ENCODE measurements at regions of chr5 and their contacts with region 1.

Region 1: DNA sequence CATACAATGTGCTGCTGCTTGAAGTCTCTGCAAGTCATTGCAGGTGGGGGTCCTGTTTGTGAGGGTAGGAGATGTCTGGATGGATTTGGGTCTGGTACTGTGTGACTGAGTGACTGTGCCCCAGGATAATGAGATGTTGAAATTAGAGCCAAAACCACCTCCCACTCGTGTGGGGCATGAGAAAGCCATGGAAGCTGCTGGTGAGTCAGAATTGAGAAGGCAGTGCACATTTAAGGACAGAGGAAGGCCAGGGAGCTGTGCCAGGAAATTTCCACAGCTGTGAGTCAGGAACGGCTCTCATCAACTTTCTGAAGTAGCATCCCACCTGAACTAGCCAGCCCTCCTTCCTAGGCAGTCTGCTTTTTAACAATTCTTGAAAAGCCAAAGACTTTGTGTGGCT is 229.8 kb downstream of the DRD1 start:
- DNase-seq: peak; percentile 85
- H3K4me3 ChIP-seq: no peak overlapping the region
- H3K27ac ChIP-seq: no peak overlapping the region
- H3K27me3 ChIP-seq: no peaks in the 10 kb centered on the region
- CTCF ChIP-seq: no peak

Region 2: DNA sequence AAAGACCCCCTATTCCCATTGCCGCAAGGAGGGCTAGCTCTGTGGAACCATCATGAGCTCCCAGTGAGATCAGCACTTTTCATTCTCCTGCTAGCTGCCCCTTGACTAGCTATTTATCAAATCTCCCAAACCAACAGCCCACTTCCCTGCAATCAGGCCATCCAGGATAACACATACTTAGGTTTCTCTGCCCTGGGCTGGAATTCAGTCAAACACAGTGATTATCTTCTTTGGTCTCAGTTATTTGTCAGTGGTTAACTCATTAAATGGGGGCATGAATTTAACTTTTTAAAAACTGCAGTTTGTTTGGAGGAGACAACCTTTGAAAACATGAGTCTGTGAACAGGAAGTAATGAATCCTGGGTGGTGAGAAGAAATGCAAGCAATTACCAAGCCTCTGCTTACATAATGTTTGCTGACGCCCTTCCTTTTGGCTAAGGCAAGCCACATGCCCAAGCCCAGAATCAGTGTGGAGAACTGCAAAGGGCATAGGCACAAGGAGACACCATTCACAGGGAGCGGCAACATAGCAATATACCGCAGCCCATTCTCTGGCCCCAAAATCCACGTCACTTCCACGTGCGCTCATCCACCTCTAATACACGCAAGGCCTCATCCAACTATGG is 45.2 kb before region 1 on chr5:
- CTCF ChIA-PET with region 1: no interaction called
- POLR2A ChIA-PET with region 1: no interaction called
- DNase-seq: no peak
- H3K4me3 ChIP-seq: no peak overlapping the region
- H3K27ac ChIP-seq: no peak overlapping the region
- H3K27me3 ChIP-seq: no peaks in the 10 kb centered on the region
- CTCF ChIP-seq: no peak

Region 3: GRCh38 chr5:175290379-175290778 is 76.2 kb after region 1 on chr5:
- CTCF ChIA-PET with region 1: no interaction called
- POLR2A ChIA-PET with region 1: interaction called, 10 read pairs
- DNase-seq: no peak
- H3K4me3 ChIP-seq: no peak overlapping the region
- H3K27ac ChIP-seq: no peak overlapping the region
- H3K27me3 ChIP-seq: peaks cover 4% of the 10 kb centered on the region
- CTCF ChIP-seq: no peak